Lower leg skin (tissue), 4 donors: ENCODE measurements at regions of chrX and their contacts with region 1.

Region 1: GRCh38 chrX:124820738-124821137 is 474.4 kb downstream of the SH2D1A start:
- DNase-seq: no peak
- H3K4me3 ChIP-seq: no peak overlapping the region
- CTCF ChIP-seq: no peak
- POLR2A ChIP-seq: no peak

Region 2: GRCh38 chrX:123121241-123121640 is 1699.5 kb before region 1 on chrX:
- intact Hi-C with region 1: no loop called
- DNase-seq: no peak
- H3K4me3 ChIP-seq: no peak overlapping the region
- CTCF ChIP-seq: no peak
- POLR2A ChIP-seq: no peak

Region 3: GRCh38 chrX:124805486-124805885 is 15.3 kb before region 1 on chrX:
- intact Hi-C with region 1: loop called (anchors 2 kb)
- DNase-seq: no peak
- H3K4me3 ChIP-seq: no peak overlapping the region
- CTCF ChIP-seq: no peak
- POLR2A ChIP-seq: no peak